Psoas muscle (tissue), 8 donors: ENCODE measurements at regions of chr16 and their contacts with region 1.

Region 1: DNA sequence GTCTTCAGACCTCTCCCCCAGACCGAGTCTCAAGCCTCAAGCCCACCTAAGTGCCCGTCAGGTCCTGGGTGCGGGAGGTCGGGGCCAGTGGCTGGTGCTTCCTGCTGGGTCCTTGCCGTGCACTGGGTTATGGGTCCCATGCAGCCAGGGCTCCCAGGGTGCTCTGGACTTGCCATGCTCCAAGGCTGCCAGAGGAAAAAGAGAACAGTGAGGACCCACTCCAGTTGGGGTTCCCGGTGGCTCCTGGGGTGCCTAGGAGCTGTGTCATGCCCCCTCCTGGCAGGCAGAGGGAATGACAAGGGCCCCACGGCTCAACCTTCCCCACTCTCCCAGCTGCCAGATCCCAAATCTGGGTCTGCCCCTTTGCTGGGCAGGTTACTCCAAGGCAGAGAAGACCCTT is 3.8 kb downstream of the SNX20 start:
- DNase-seq: no peak
- ATAC-seq: no peak
- H3K4me3 ChIP-seq: no peak overlapping the region
- H3K27ac ChIP-seq: no peak overlapping the region
- H3K4me1 ChIP-seq: no peaks in the 10 kb centered on the region
- H3K27me3 ChIP-seq: peaks cover 0 to 9% (median 3%) of the 10 kb centered on the region in 3 donors
- CTCF ChIP-seq: peak; percentile 12

Region 2: DNA sequence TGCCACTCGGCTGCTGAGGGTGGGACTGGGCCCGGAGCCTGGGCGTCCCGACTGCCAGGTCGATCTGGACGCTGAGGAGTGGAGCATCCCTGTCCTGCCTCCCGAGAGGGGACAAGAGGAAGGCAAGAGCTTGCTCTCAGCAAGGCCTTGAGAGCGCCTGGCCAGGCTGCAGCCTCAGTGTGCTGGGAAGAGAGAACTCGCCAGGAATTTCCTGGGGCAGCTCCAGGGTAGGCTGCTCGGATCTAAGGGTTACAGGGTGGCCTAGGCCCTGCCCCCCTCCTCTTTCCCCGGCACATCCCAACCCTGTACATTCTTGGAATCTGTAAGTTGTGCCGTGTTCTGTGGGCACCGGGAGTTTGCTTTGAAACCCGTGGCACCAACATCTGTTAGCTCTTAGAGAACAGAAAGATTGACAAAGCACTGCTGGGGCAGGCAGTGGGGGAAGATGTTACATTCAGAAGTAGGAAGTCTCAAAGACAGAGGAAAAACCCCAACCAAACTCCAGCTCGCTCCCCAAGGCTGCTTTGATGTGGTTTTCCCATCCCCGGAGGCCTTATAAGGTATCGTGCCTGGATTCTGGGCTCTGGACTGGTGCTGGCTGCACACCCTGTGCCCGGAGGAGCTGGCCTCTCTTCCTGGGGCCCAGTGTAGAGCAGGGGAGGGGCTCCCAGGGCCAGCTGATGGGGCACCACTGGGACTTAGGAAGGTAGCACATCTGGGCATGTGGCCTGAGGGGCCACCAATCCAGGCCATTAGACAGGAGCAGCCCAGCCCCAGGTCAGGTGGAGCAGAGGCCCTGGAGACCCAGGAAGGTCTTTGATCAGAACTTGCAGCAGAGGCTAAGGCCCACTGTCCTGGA is 73.9 kb before region 1 on chr16:
- intact Hi-C with region 1: no loop called
- DNase-seq: no peak
- ATAC-seq: peak in 1 of 4 donors; percentile 16
- H3K4me3 ChIP-seq: no peak overlapping the region
- H3K27ac ChIP-seq: peak overlapping the region; percentile 16
- H3K4me1 ChIP-seq: no peaks in the 10 kb centered on the region
- H3K27me3 ChIP-seq: no peaks in the 10 kb centered on the region
- CTCF ChIP-seq: no peak

Region 3: DNA sequence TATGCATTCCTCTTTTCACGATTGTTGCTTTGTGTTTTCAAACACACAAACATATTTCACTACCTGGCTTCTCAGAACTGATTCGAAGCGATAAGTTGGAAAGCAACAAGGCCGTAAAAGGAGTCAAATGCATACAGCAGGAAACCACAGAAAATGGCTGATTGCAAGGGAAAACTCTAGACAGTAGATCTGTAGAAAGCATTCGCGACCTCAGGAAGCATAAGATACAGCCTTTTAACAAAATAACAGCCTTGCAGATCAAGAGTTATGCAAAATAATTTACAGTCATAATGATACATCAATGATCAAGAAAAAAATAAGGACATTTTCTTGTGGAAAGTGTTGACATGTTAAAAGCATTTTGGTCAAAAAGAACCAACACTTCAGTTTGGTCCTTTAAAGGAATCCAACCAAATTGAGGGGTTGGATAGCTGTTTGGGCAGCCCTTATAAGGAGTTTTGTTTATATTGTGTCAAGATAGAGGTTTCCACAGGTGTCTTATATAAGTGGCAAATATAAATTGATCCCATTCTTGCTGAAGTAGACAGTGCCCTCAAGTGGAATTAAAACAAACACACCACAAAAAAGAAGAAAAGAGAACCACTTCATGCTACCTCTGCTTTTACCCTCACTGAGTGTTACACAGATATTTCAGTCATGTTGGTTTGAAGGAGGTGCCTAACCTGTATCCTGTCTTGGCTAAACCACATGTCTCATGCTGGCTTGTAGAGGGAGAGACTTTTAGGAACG is 70.0 kb after region 1 on chr16:
- intact Hi-C with region 1: loop called in 1 of 2 experiments (anchors 5 kb)
- DNase-seq: no peak
- ATAC-seq: peak; percentile 33 to 68 (median 56)
- H3K4me3 ChIP-seq: no peak overlapping the region
- H3K27ac ChIP-seq: no peak overlapping the region
- H3K4me1 ChIP-seq: peaks cover 48% of the 10 kb centered on the region
- H3K27me3 ChIP-seq: no peaks in the 10 kb centered on the region
- CTCF ChIP-seq: peak; percentile 46